ENCODE measurements at regions of chr6 and their contacts with region 1.

Region 1: GRCh38 chr6:43842231-43842794 is 72.3 kb downstream of the VEGFA start:
- DNase-seq: no peak
- ATAC-seq: no peak
- H3K4me3 ChIP-seq: no peak overlapping the region
- H3K27ac ChIP-seq: peak overlapping the region in 2 of 4 donors; percentile 34 to 42
- H3K4me1 ChIP-seq: peaks cover 23% of the 10 kb centered on the region
- H3K27me3 ChIP-seq: no peaks in the 10 kb centered on the region
- CTCF ChIP-seq: no peak
- POLR2A ChIP-seq: no peak

Region 2: DNA sequence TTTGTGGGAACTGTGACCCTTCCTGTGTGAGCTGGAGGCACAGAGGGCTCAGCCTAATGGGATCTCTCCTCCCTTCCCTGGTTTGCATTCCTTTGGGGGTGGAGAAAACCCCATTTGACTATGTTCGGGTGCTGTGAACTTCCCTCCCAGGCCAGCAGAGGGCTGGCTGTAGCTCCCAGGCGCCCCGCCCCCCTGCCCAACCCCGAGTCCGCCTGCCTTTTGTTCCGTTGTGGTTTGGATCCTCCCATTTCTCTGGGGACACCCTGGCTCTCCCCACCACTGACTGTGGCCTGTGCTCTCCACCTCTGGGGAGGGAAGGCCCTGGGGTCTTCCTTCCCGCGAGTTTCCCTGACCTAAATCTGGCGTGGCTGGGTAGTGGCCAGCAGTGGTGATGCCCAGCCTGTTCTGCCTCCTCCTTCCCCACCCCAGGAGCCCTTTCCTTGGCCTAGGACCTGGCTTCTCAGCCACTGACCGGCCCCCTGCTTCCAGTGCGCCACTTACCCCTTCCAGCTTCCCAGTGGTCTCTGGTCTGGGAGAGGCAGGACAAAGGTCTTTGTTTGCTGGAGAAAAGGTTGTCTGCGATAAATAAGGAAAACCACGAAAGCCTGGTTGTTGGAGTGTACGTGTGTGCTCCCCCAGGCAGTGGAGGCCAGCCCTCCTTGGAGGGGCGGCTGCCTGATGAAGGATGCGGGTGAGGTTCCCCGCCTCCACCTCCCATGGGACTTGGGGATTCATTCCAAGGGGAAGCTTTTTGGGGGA is 67.4 kb before region 1 on chr6:
- intact Hi-C with region 1: loop called (anchors 5 kb)
- DNase-seq: peak; percentile 75 to 82 (median 78)
- ATAC-seq: peak; percentile 9
- H3K4me3 ChIP-seq: no peak overlapping the region
- H3K27ac ChIP-seq: peak overlapping the region; percentile 95 to 99 (median 98)
- H3K4me1 ChIP-seq: peaks cover 71% of the 10 kb centered on the region
- H3K27me3 ChIP-seq: no peaks in the 10 kb centered on the region
- CTCF ChIP-seq: peak; percentile 66 to 95 (median 85)
- POLR2A ChIP-seq: no peak

Region 3: GRCh38 chr6:44058617-44059358 is 216.5 kb after region 1 on chr6:
- intact Hi-C with region 1: no loop called
- DNase-seq: peak in 3 of 4 donors; percentile 43 to 87 (median 61)
- ATAC-seq: peak; percentile 66
- H3K4me3 ChIP-seq: no peak overlapping the region
- H3K27ac ChIP-seq: peak overlapping the region in 2 of 4 donors; percentile 21 to 74
- H3K4me1 ChIP-seq: no peaks in the 10 kb centered on the region
- H3K27me3 ChIP-seq: no peaks in the 10 kb centered on the region
- CTCF ChIP-seq: no peak
- POLR2A ChIP-seq: peak in 2 of 3 donors; percentile 10 to 36

Measured in body of pancreas (tissue), 4 donors.